Heart left ventricle (tissue), 16 donors: ENCODE measurements at regions of chr4 and their contacts with region 1.

Region 1: GRCh38 chr4:113394730-113395530 is 345.5 kb downstream of the ANK2 start:
- DNase-seq: peak in 2 of 5 donors; percentile 64 to 73
- ATAC-seq: peak; percentile 91 to 95 (median 94)
- H3K4me3 ChIP-seq: no peak overlapping the region
- H3K27ac ChIP-seq: peak overlapping the region in 2 of 12 donors; percentile 35 to 46
- H3K4me1 ChIP-seq: peaks cover 0 to 17% (median 0%) of the 10 kb centered on the region in 12 donors
- H3K27me3 ChIP-seq: no peaks in the 10 kb centered on the region
- CTCF ChIP-seq: peak; percentile 70 to 92 (median 88)
- POLR2A ChIP-seq: no peak

Region 2: DNA sequence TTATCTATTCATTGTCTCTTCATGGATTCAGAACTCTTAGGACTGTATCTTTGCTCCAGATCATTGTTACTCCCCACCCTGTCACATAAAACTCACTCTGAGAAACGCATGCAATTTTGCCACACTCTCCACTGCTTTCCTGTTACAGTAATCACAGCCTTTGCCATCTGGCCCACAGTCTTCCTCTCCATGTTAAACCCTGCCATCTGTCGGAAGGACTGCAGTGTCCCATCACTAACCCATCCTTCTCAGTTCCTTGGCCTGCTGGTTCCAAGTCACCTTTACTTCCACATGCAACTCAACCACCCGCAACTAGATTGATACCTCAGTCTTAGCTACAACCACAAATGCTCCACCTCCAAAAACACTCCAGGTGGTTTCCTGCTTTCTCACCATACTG is 1558.3 kb before region 1 on chr4:
- intact Hi-C with region 1: no loop called
- DNase-seq: no peak
- ATAC-seq: no peak
- H3K4me3 ChIP-seq: no peak overlapping the region
- H3K27ac ChIP-seq: no peak overlapping the region
- H3K4me1 ChIP-seq: no peaks in the 10 kb centered on the region
- H3K27me3 ChIP-seq: no peaks in the 10 kb centered on the region
- CTCF ChIP-seq: no peak
- POLR2A ChIP-seq: no peak

Region 3: DNA sequence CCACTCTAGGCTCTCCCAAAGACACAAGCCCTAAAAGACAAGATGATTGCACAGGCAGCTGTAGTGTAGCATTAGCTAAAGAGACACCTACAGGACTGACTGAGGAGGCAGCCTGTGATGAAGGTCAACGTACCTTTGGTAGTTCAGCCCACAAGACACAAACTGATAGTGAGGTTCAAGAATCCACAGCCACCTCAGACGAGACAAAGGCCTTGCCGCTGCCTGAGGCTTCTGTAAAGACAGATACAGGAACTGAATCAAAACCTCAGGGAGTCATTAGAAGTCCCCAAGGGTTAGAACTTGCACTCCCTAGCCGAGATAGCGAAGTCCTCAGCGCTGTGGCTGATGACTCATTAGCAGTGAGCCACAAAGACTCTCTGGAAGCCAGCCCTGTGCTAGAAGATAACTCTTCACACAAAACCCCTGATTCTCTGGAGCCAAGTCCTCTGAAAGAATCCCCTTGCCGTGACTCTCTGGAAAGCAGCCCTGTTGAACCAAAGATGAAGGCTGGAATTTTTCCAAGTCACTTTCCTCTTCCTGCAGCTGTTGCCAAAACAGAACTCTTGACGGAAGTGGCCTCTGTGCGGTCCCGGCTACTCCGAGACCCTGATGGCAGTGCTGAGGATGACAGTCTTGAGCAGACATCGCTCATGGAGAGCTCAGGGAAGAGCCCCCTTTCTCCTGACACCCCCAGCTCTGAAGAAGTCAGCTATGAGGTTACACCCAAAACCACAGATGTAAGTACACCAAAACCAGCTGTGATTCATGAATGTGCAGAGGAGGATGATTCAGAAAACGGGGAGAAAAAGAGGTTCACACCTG is 39.2 kb before region 1 on chr4:
- intact Hi-C with region 1: no loop called
- DNase-seq: peak; percentile 26 to 66 (median 49)
- ATAC-seq: peak; percentile 43 to 91 (median 84)
- H3K4me3 ChIP-seq: peak overlapping the region in 7 of 12 donors; percentile 6 to 39 (median 10)
- H3K27ac ChIP-seq: peak overlapping the region in 6 of 12 donors; percentile 10 to 41 (median 23)
- H3K4me1 ChIP-seq: peaks cover 0 to 15% (median 8%) of the 10 kb centered on the region in 12 donors
- H3K27me3 ChIP-seq: no peaks in the 10 kb centered on the region
- CTCF ChIP-seq: peak in 1 of 12 donors; percentile 20
- POLR2A ChIP-seq: no peak

Region 4: GRCh38 chr4:113435893-113436292 is 41.0 kb after region 1 on chr4:
- intact Hi-C with region 1: loop called in 2 of 10 experiments (anchors 5 kb)
- DNase-seq: peak in 4 of 5 donors; percentile 60 to 71 (median 68)
- ATAC-seq: peak; percentile 60 to 87 (median 82)
- H3K4me3 ChIP-seq: peak overlapping the region in 1 of 12 donors; percentile 4
- H3K27ac ChIP-seq: peak overlapping the region; percentile 8 to 89 (median 72)
- H3K4me1 ChIP-seq: peaks cover 0 to 32% (median 15%) of the 10 kb centered on the region in 12 donors
- H3K27me3 ChIP-seq: no peaks in the 10 kb centered on the region
- CTCF ChIP-seq: no peak
- POLR2A ChIP-seq: no peak

Region 5: GRCh38 chr4:113539408-113539807 is 144.5 kb after region 1 on chr4:
- intact Hi-C with region 1: loop called in 8 of 10 experiments (anchors 10 kb)
- DNase-seq: no peak
- ATAC-seq: no peak
- H3K4me3 ChIP-seq: no peak overlapping the region
- H3K27ac ChIP-seq: peak overlapping the region in 6 of 12 donors; percentile 19 to 88 (median 77)
- H3K4me1 ChIP-seq: peaks cover 2 to 70% (median 40%) of the 10 kb centered on the region in 12 donors
- H3K27me3 ChIP-seq: no peaks in the 10 kb centered on the region
- CTCF ChIP-seq: no peak
- POLR2A ChIP-seq: no peak

Region 6: DNA sequence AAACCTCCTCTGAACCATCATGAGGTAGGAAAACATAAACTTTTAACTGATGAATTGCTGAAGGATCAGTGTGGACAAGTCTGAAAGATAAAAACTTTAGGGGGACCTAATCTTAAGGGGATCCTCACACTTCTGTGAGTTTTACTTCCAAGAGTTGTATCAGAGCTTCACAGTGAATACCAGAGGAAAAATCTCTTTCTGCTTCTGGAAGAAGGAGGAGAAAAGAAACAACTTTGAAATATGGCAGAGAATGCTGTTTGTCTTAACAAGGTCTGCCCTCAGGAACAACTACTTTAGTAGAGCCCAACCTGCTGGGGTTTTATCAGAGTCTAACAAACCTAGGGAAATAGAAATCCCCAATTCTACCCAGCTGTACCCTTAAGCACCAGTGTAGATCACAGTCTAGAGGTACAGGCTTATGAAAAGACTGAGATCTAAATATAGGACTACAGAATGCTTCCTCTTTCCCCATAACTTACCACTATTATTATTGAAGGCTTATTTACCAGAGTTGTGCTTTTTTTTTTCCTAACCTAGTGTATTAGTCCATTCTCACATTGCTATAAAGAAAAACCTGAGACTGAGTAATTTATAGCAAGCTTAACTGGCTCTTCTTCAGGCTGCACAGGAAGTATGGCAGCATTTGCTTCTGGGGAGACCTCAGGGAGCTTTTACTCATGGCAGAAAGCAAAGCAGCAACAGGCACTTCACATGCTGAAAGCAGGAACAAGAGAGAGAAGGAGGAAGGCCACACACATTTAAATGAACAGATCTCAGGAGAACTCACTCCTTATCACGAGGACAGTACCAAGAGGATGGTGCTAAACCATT is 198.7 kb after region 1 on chr4:
- intact Hi-C with region 1: no loop called
- DNase-seq: no peak
- ATAC-seq: peak in 1 of 4 donors; percentile 32
- H3K4me3 ChIP-seq: no peak overlapping the region
- H3K27ac ChIP-seq: peak overlapping the region in 8 of 12 donors; percentile 24 to 62 (median 38)
- H3K4me1 ChIP-seq: peaks cover 0 to 37% (median 15%) of the 10 kb centered on the region in 12 donors
- H3K27me3 ChIP-seq: no peaks in the 10 kb centered on the region
- CTCF ChIP-seq: no peak
- POLR2A ChIP-seq: no peak

Region 7: DNA sequence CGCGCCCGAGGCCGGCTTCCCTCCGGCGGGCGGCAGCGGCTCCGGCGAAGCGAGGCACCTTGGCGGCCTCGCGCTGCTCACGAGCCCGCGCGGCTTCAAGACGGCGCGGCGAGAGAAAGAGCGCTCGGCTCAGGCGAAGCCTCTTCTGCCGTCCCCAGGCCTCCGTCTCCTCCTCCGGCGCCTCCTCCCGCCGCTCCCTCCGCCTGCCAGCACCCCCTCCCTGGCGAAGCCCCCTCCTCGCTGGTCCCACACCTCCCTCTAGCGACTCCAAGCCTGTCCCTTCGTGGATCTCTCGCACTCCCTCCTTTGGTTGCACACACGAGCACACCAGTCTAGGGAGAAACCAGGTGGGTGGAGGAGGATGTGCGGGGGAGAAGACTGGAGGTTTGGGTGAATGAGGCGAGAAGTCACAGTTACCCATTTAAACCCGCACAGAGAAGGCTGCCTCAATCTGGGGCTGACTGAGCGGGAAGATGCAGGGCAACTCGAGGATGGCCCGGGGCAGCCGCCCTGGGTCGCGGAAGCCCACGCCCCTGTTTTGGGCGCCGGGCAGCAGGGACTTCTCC is 366.8 kb after region 1 on chr4 and contains the start of gene CAMK2D:
- intact Hi-C with region 1: loop called in 9 of 10 experiments (anchors 2 to 10 kb)
- DNase-seq: peak; percentile 90 to 92 (median 92)
- ATAC-seq: peak; percentile 74 to 84 (median 80)
- H3K4me3 ChIP-seq: peak within 1 kb of the TSS; percentile 70 to 91 (median 88)
- H3K27ac ChIP-seq: peak within 1 kb of the TSS; percentile 97 to 100 (median 99)
- H3K4me1 ChIP-seq: peaks cover 0 to 42% (median 12%) of the 10 kb centered on the region in 12 donors
- H3K27me3 ChIP-seq: no peaks in the 10 kb centered on the region
- CTCF ChIP-seq: peak in 11 of 12 donors; percentile 40 to 76 (median 67)
- POLR2A ChIP-seq: peak in 1 of 2 donors; percentile 57
- total RNA-seq, gene CAMK2D: 167 to 294 (median 224) TPM

Region 8: GRCh38 chr4:113921089-113921794 is 526.3 kb after region 1 on chr4:
- intact Hi-C with region 1: no loop called
- DNase-seq: no peak
- ATAC-seq: peak in 1 of 4 donors; percentile 47
- H3K4me3 ChIP-seq: no peak overlapping the region
- H3K27ac ChIP-seq: no peak overlapping the region
- H3K4me1 ChIP-seq: peaks cover 0 to 11% (median 0%) of the 10 kb centered on the region in 12 donors
- H3K27me3 ChIP-seq: no peaks in the 10 kb centered on the region
- CTCF ChIP-seq: no peak
- POLR2A ChIP-seq: no peak

Region 9: GRCh38 chr4:113952452-113953029 is 557.6 kb after region 1 on chr4:
- intact Hi-C with region 1: loop called in 1 of 10 experiments (anchors 5 kb)
- DNase-seq: no peak
- ATAC-seq: peak in 3 of 4 donors; percentile 61 to 80 (median 70)
- H3K4me3 ChIP-seq: no peak overlapping the region
- H3K27ac ChIP-seq: no peak overlapping the region
- H3K4me1 ChIP-seq: peaks cover 0 to 18% (median 7%) of the 10 kb centered on the region in 12 donors
- H3K27me3 ChIP-seq: no peaks in the 10 kb centered on the region
- CTCF ChIP-seq: peak; percentile 45 to 68 (median 54)
- POLR2A ChIP-seq: no peak

Region 10: GRCh38 chr4:114180481-114180880 is 785.6 kb after region 1 on chr4:
- intact Hi-C with region 1: loop called in 1 of 10 experiments (anchors 10 kb)
- DNase-seq: peak in 3 of 5 donors; percentile 10 to 58 (median 19)
- ATAC-seq: peak; percentile 20 to 73 (median 28)
- H3K4me3 ChIP-seq: no peak overlapping the region
- H3K27ac ChIP-seq: no peak overlapping the region
- H3K4me1 ChIP-seq: no peaks in the 10 kb centered on the region
- H3K27me3 ChIP-seq: no peaks in the 10 kb centered on the region
- CTCF ChIP-seq: peak in 7 of 12 donors; percentile 30 to 53 (median 35)
- POLR2A ChIP-seq: no peak

Region 11: GRCh38 chr4:114386637-114387233 is 991.8 kb after region 1 on chr4:
- intact Hi-C with region 1: loop called in 2 of 10 experiments (anchors 5 kb)
- DNase-seq: no peak
- ATAC-seq: no peak
- H3K4me3 ChIP-seq: no peak overlapping the region
- H3K27ac ChIP-seq: no peak overlapping the region
- H3K4me1 ChIP-seq: no peaks in the 10 kb centered on the region
- H3K27me3 ChIP-seq: peaks cover 0 to 9% (median 0%) of the 10 kb centered on the region in 9 donors
- CTCF ChIP-seq: peak; percentile 37 to 75 (median 61)
- POLR2A ChIP-seq: no peak